IMR-90 (cell line): ENCODE measurements at regions of chr11 and their contacts with region 1.

Region 1: GRCh38 chr11:128522055-128522942 is 65.1 kb downstream of the ETS1 start:
- DNase-seq: peak; percentile 100
- ATAC-seq: peak; percentile 90
- H3K4me3 ChIP-seq: peak overlapping the region; percentile 99
- H3K27ac ChIP-seq: peak overlapping the region; percentile 98
- H3K4me1 ChIP-seq: peaks cover 26% of the 10 kb centered on the region
- H3K27me3 ChIP-seq: no peaks in the 10 kb centered on the region
- CTCF ChIP-seq: no peak
- POLR2A ChIP-seq: peak; percentile 96
- RAD21 ChIP-seq: peak; percentile 27

Region 2: GRCh38 chr11:128290106-128290840 is 232.0 kb before region 1 on chr11:
- CTCF ChIA-PET with region 1: interaction called, 4 read pairs
- POLR2A ChIA-PET with region 1: no interaction called
- dilution Hi-C with region 1: no loop called
- in situ Hi-C with region 1: no loop called
- intact Hi-C with region 1: loop called (anchors 1 kb)
- DNase-seq: peak; percentile 95
- ATAC-seq: peak; percentile 95
- H3K4me3 ChIP-seq: no peak overlapping the region
- H3K27ac ChIP-seq: no peak overlapping the region
- H3K4me1 ChIP-seq: peaks cover 14% of the 10 kb centered on the region
- H3K27me3 ChIP-seq: peaks cover 1% of the 10 kb centered on the region; the same call in 1 of the 2 replicates
- CTCF ChIP-seq: peak; percentile 89
- POLR2A ChIP-seq: peak; percentile 46; the same call in 1 of the 2 replicates
- RAD21 ChIP-seq: peak; percentile 99

Region 3: DNA sequence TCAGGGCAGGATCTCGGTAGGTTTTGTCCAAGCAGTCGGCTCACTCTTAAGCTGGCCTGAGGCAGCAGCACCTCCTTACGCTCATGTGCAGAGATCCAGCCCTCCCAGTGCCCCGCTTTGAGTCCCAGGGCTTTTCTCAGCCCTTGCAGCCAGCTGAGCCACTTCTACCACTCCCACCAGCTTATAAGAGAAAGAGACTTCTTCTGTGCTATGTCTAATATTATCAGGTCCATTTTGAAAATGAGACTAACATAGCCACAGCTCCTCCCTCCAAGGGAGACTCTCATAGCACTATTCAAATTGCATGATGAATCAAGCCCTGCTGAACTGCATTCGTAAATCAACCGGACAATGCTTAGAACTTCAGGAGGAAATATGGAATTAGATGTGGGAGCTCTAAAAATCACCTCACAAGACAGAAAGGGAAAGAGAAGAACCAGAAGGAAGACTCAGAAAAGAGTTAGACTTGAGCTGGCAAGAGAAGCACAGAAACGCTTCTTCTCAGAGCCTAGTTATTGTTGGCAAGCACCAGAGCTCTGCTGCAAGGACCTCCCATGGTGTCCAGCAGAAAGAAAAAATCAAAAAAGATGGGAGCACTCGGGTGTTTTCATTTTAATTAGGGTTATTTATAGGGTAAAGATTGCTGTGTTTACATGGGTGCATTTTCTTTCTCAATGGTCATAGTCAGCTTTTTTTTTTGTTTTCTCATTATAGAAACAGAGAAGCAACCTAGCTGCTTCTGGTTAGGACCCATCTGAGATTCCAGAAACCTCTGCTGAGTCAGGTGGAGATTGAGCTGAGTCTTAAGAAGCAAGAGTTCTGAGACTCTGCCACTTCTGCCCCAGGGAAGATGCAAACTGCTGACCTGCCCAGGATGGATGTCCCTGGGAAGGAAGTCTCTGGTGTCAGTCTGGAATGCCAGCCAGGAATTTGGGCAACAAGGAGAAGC is 116.3 kb before region 1 on chr11:
- CTCF ChIA-PET with region 1: no interaction called
- POLR2A ChIA-PET with region 1: no interaction called
- dilution Hi-C with region 1: no loop called
- in situ Hi-C with region 1: no loop called
- intact Hi-C with region 1: loop called (anchors 5 kb)
- DNase-seq: no peak
- ATAC-seq: no peak
- H3K4me3 ChIP-seq: no peak overlapping the region
- H3K27ac ChIP-seq: no peak overlapping the region
- H3K4me1 ChIP-seq: peaks cover 19% of the 10 kb centered on the region
- H3K27me3 ChIP-seq: no peaks in the 10 kb centered on the region
- CTCF ChIP-seq: no peak
- POLR2A ChIP-seq: no peak
- RAD21 ChIP-seq: no peak

Region 4: DNA sequence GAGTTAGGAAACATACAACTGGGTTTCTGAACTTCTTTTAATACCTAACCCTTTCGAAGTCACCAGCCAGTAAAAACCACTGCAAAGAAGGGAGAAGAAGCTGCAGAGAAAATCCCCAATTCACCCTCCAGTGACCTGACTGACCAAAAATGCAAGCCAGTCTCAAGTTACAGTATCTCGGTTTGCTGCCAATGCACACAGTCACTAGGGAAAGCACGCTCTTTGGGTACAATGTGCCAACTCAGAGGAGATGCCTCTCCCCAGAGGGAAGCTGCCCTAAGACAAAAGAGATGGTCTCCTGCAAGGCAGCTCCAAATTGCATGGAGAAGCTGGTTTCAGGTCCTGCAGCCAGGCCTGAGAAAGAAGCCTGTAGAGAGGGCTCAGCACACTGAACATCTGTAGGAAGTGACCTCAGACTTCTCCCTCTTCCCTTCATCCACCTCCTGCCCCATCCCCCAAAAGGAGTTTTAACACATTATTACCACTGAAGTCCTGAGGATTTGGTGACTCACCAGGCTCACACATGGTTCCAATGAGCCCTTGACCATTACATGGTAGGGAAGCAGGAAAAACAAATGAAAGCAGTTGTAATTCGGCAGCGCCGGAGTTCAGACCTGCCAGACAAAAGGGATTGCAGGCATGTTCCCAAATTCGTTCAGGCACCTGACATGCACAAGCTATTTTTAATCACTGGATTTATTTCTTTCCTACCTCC is 25.1 kb before region 1 on chr11:
- CTCF ChIA-PET with region 1: interaction called, 4 read pairs
- POLR2A ChIA-PET with region 1: no interaction called
- dilution Hi-C with region 1: no loop called
- in situ Hi-C with region 1: no loop called
- intact Hi-C with region 1: loop called (anchors 1 kb)
- DNase-seq: peak; percentile 99
- ATAC-seq: peak; percentile 74
- H3K4me3 ChIP-seq: peak overlapping the region; percentile 20; the same call in 1 of the 2 replicates
- H3K27ac ChIP-seq: peak overlapping the region; percentile 79
- H3K4me1 ChIP-seq: peaks cover 41% of the 10 kb centered on the region
- H3K27me3 ChIP-seq: no peaks in the 10 kb centered on the region
- CTCF ChIP-seq: no peak
- POLR2A ChIP-seq: peak; percentile 84
- RAD21 ChIP-seq: no peak

Region 5: DNA sequence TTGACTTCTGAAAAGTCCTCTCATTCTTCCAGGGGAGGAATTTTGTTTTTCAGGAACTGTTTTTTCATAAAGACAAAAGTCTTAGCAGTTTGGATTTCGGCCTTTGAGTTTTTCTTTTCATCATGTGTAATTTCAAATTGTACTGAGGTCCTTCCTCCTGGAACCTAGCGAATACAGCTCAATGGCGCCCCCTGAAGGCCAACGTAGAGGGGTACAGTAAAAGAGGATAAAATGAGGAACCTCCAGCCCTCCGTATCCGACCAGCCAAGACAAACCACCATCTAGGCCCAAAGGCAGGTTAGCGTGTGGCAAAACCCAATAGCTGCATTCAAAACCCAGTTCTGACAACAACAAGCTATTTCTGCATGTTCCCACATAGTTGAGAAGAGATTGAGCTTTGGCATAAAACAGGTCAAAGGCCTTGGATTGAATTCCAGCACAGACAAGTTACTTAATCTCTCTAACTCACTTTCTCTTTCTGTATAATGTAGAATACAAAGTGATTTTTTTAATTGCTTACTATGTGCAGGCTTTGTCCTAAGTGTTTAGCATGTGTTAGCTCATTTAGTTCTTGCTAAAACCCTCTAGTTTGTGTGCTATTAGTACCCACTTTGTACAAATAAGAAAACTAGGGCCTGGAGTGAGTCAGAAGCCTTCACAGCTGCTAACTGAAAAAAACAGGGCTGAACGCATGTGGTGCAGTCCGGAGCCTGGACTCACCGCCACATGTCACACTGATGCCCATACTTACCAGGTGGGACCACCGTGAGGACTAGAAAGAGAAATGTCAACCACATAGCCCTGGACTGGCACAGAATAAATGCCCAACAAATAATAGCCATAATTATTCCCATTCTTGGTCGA is 108.3 kb after region 1 on chr11:
- CTCF ChIA-PET with region 1: interaction called, 12 read pairs
- POLR2A ChIA-PET with region 1: no interaction called
- dilution Hi-C with region 1: no loop called
- in situ Hi-C with region 1: no loop called
- intact Hi-C with region 1: loop called (anchors 1 kb)
- DNase-seq: peak; percentile 86
- ATAC-seq: peak; percentile 96
- H3K4me3 ChIP-seq: no peak overlapping the region
- H3K27ac ChIP-seq: no peak overlapping the region
- H3K4me1 ChIP-seq: no peaks in the 10 kb centered on the region
- H3K27me3 ChIP-seq: peaks cover 4% of the 10 kb centered on the region
- CTCF ChIP-seq: peak; percentile 97
- POLR2A ChIP-seq: no peak
- RAD21 ChIP-seq: peak; percentile 97